ENCODE measurements at regions of chr9 and their contacts with region 1.

Region 1: GRCh38 chr9:35029852-35030251 is 40.3 kb downstream of the DNAJB5 start:
- DNase-seq: no peak
- H3K4me3 ChIP-seq: no peak overlapping the region
- H3K27ac ChIP-seq: no peak overlapping the region
- H3K4me1 ChIP-seq: peaks cover 15% of the 10 kb centered on the region
- H3K27me3 ChIP-seq: no peaks in the 10 kb centered on the region
- CTCF ChIP-seq: no peak

Region 2: DNA sequence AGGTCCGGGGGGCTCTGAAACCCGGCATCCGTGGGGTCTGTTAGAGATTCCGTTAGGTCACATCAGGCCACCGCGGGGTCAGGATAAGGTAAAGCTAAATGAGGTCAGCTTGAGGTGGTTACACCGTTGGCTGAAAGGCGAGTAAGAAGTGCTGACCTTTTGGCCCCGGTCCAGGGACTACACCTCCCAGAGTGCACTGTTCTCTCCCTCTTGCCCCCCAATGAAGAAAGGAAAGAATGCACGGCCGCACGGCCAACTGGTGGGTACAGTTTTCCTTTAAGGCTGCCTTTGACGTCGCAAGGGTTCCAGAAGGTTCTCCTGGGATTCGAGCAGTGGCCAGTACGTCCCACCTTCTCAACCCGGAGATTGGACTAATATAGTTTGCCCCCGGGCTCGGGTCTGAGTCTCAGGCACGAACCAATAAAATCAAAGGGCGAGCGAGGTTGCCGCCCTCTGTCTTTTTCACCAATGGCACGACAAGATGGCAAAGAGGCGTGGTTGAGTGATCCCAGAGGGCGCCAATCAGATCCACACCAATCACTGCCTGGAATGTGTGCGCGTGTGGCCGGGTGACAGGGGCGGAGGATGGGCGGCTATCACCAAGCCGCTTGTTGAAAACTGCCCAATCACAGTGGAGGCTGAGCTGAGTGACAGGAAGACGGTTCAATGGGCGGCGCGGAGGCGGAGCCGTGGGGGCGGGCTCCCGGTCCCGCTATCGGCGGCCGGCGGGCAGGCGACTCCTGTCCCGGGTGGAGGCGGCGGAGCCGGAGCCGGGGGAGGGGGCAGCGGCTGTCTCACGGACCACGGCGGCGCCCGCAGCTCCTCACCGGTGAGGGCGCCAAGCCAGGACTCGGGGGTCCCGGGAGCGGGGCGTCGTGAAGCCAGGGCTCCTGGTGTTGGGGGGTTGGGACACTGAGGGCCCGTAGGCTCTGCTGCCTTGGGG is 40.6 kb before region 1 on chr9 and contains the start of gene DNAJB5:
- CTCF ChIA-PET with region 1: interaction called, 22 read pairs
- dilution Hi-C with region 1: no loop called
- in situ Hi-C with region 1: no loop called
- intact Hi-C with region 1: no loop called
- DNase-seq: peak; percentile 99
- H3K4me3 ChIP-seq: peak within 1 kb of the TSS; percentile 63 to 88 (median 72)
- H3K27ac ChIP-seq: peak within 1 kb of the TSS; percentile 52
- H3K4me1 ChIP-seq: peaks cover 41% of the 10 kb centered on the region
- H3K27me3 ChIP-seq: no peaks in the 10 kb centered on the region
- CTCF ChIP-seq: no peak
- total RNA-seq, gene DNAJB5: 8.4 to 10.0 TPM

Measured in mammary epithelial cell (primary cell).